Heart left ventricle (tissue), 16 donors: ENCODE measurements at regions of chr10 and their contacts with region 1.

Region 1: GRCh38 chr10:71569775-71570588 is 149.6 kb downstream of the C10orf105 start:
- DNase-seq: peak; percentile 51 to 74 (median 71)
- ATAC-seq: peak in 3 of 4 donors; percentile 22 to 73 (median 62)
- H3K4me3 ChIP-seq: no peak overlapping the region
- H3K27ac ChIP-seq: no peak overlapping the region
- H3K4me1 ChIP-seq: no peaks in the 10 kb centered on the region
- H3K27me3 ChIP-seq: no peaks in the 10 kb centered on the region
- CTCF ChIP-seq: peak; percentile 80 to 94 (median 86)
- POLR2A ChIP-seq: no peak

Region 2: GRCh38 chr10:71314028-71314693 is 255.8 kb before region 1 on chr10:
- intact Hi-C with region 1: loop called in 9 of 10 experiments (anchors 1 to 10 kb)
- DNase-seq: peak in 4 of 5 donors; percentile 44 to 66 (median 50)
- ATAC-seq: peak; percentile 54 to 68 (median 66)
- H3K4me3 ChIP-seq: peak overlapping the region in 4 of 12 donors; percentile 14 to 36 (median 26)
- H3K27ac ChIP-seq: peak overlapping the region in 3 of 12 donors; percentile 21 to 57 (median 30)
- H3K4me1 ChIP-seq: peaks cover 0 to 34% (median 18%) of the 10 kb centered on the region in 12 donors
- H3K27me3 ChIP-seq: no peaks in the 10 kb centered on the region
- CTCF ChIP-seq: peak; percentile 74 to 96 (median 86)
- POLR2A ChIP-seq: no peak

Region 3: DNA sequence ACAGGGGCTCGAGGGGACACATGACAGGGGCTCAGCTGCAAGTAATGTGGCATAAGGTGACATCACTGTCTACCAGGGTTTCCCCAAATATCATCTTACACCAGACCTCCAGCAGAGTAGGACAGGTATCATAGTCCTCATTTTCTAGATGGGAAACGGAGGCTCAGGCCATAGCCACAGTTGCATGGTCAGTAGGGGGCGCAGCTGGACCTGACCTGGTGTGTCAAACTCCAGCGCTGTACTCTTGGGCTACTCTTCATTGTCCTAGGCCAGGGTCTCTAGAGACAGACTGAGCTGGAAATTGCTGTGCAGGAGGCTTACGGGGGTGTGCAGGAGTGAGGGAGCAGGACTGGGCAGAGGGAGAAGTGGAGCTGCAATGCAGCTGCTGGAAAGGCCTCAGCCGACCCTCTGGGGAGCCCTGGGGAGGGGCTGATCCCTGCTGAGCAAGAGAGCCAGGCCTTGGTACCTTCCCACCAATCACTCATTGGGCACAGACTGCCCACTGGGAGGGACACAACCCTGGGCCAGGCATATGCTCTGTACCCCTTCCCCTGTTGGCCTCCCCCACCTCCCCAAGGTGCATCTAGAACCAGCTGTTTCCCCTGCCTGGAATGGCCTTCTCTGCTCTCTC is 83.4 kb before region 1 on chr10:
- intact Hi-C with region 1: loop called in 5 of 10 experiments (anchors 2 to 5 kb)
- DNase-seq: peak in 4 of 5 donors; percentile 28 to 57 (median 46)
- ATAC-seq: peak in 3 of 4 donors; percentile 46 to 67 (median 49)
- H3K4me3 ChIP-seq: no peak overlapping the region
- H3K27ac ChIP-seq: no peak overlapping the region
- H3K4me1 ChIP-seq: peaks cover 0 to 13% (median 0%) of the 10 kb centered on the region in 12 donors
- H3K27me3 ChIP-seq: no peaks in the 10 kb centered on the region
- CTCF ChIP-seq: peak; percentile 31 to 63 (median 49)
- POLR2A ChIP-seq: no peak

Region 4: DNA sequence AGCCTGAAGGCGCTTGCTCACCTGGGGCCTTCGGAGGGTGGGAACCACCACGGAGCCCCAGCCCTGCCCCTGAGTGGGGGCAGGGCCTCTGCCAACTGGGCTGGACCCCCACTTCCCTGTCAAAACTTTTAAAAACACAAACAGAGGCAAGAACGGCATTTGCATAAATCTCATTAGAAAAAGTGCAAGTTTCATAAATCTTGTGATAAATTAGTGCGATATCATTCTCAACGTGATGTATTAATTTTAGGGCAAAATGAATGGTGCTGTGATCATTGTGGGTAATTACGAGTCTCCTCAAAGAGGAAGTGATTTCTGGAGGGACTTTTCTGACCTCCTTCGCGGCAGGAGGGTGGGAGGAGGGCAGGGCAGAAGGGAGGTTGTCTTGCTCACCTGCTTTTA is 75.0 kb before region 1 on chr10:
- intact Hi-C with region 1: loop called in 1 of 10 experiments (anchors 5 kb)
- DNase-seq: no peak
- ATAC-seq: no peak
- H3K4me3 ChIP-seq: no peak overlapping the region
- H3K27ac ChIP-seq: no peak overlapping the region
- H3K4me1 ChIP-seq: peaks cover 0 to 10% (median 0%) of the 10 kb centered on the region in 12 donors
- H3K27me3 ChIP-seq: no peaks in the 10 kb centered on the region
- CTCF ChIP-seq: no peak
- POLR2A ChIP-seq: no peak

Region 5: DNA sequence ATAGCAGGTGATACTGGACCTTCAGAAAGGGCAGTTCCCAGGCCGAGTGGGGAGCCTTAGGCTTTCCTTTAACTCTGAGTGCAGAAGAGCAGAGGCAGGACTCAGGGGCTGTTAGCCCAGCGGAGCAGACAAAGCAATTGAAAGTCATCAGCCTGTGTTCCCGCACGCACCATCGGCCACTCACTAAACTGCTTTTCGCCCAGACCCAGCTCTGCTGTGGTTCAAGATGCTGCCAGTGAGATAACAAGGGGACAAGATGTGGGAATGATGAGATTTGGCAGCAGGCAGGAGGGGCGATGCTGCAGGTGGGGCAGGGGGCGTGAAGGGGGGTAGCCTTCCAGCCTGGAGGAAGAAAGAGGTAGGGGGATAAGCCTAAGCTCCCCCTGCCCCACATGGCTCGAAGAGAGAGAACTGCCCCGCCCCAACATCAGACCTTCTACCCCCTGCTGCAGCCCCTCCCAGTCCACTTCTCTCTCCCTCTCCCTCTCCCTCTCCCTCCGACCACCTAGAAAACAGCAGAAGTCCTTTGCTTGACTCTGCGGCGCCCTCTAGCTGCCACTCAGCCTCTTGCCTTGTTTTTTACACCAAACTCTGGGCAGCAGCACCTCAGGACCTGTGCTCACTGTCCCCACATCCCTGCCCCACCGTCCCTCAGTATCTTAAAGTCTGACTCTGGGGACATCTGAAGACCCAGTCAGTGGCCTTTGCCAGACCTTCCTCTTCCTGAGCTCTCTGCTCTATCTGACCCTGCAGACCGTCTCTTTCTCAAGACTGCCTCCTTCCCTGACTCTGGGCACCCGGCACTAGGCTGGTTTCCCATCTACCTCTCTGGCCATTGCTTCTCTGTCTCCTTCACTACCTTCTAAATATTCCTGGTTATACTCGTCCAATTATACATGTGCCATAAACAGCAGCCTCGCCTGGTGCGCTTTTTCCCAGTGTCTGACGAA is 39.1 kb after region 1 on chr10:
- intact Hi-C with region 1: loop called in 1 of 10 experiments (anchors 5 kb)
- DNase-seq: peak; percentile 72 to 87 (median 81)
- ATAC-seq: peak in 3 of 4 donors; percentile 22 to 68 (median 58)
- H3K4me3 ChIP-seq: no peak overlapping the region
- H3K27ac ChIP-seq: no peak overlapping the region
- H3K4me1 ChIP-seq: peaks cover 3 to 22% (median 17%) of the 10 kb centered on the region in 12 donors
- H3K27me3 ChIP-seq: no peaks in the 10 kb centered on the region
- CTCF ChIP-seq: peak; percentile 60 to 86 (median 82)
- POLR2A ChIP-seq: no peak